Natural killer cell (primary cell): ENCODE measurements at regions of chr1 and their contacts with region 1.

Region 1: GRCh38 chr1:38873027-38873969 is at the start of gene MYCBP:
- DNase-seq: peak; percentile 96 to 99
- ATAC-seq: peak; percentile 98 to 99 (median 99)
- H3K4me3 ChIP-seq: peak within 1 kb of the TSS; percentile 80
- H3K4me3 Mint-ChIP-seq: peak within 1 kb of the TSS; percentile 89
- H3K27ac ChIP-seq: peak within 1 kb of the TSS; percentile 65
- H3K27ac Mint-ChIP-seq: peak within 1 kb of the TSS; percentile 84 to 89
- H3K4me1 ChIP-seq: peaks cover 13% of the 10 kb centered on the region
- H3K4me1 Mint-ChIP-seq: peaks cover 22 to 25% of the 10 kb centered on the region in 2 donors
- H3K27me3 ChIP-seq: no peaks in the 10 kb centered on the region
- H3K27me3 Mint-ChIP-seq: no peaks in the 10 kb centered on the region
- CTCF ChIP-seq: no peak
- total RNA-seq, gene MYCBP: 5.7 to 11.4 (median 8.9) TPM

Region 2: GRCh38 chr1:38859561-38860453 is 13.5 kb before region 1 on chr1 and contains the start of gene RRAGC:
- intact Hi-C with region 1: loop called (anchors 1 kb)
- DNase-seq: peak; percentile 97 to 98
- ATAC-seq: peak; percentile 95 to 99 (median 97)
- H3K4me3 ChIP-seq: peak within 1 kb of the TSS; percentile 77
- H3K4me3 Mint-ChIP-seq: peak within 1 kb of the TSS; percentile 94
- H3K27ac ChIP-seq: peak within 1 kb of the TSS; percentile 62
- H3K27ac Mint-ChIP-seq: peak within 1 kb of the TSS; percentile 83 to 88
- H3K4me1 ChIP-seq: peaks cover 27% of the 10 kb centered on the region
- H3K4me1 Mint-ChIP-seq: peaks cover 25 to 41% of the 10 kb centered on the region in 2 donors
- H3K27me3 ChIP-seq: no peaks in the 10 kb centered on the region
- H3K27me3 Mint-ChIP-seq: no peaks in the 10 kb centered on the region
- CTCF ChIP-seq: no peak
- total RNA-seq, gene RRAGC: 15.9 to 24.9 (median 22.0) TPM